ENCODE measurements at regions of chr19 and their contacts with region 1.

Region 1: DNA sequence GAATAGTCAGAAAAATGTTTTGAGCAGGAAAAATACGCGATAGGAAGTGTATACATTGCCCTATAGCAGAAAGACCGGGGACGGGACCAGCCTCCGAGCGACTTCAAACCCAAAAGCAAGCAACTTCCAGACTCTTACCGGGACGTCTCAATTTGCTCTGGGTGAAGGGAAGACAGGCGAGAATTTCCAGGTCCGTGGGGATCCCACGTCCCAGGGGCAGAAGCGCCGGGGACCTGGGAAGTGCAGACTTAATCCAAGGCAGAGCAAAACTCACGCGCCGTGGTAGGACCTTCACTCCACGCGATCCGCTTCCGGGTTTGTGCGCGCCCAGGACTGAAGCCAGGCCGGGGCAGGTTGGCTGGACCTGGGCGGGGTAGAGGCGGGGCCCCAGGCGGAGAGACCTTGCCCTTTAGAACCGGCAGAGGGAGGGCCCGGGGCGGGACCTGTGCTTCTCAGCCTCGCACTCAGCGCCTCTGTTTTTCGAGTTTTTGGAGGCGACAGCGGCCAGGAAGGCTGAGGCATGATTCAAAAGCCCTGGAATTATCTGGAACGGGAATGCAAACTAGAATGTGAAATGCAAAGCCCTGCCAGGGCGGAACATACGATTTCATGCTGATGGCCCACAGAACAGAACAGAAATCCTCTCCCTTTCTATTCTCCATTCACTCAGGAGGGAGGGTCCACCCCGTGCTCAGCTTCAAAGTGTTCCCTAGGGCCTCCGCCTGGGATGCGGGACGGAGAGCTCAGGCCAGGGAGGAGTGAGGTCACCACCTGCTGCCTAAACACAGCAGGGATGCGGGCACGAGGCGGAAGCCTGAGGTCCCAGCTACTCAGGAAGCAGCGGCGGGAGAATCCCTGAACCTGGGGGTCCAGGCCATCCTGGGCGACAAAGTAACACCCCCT is at the start of gene ZNF600:
- DNase-seq: peak; percentile 84
- H3K4me3 Mint-ChIP-seq: peak within 1 kb of the TSS; percentile 83
- H3K27ac Mint-ChIP-seq: peak within 1 kb of the TSS; percentile 50
- H3K4me1 Mint-ChIP-seq: peaks cover 28% of the 10 kb centered on the region
- H3K27me3 Mint-ChIP-seq: no peaks in the 10 kb centered on the region
- total RNA-seq, gene ZNF600: 4.8 to 4.9 TPM

Region 2: GRCh38 chr19:52809801-52810200 is 23.1 kb after region 1 on chr19:
- CTCF ChIA-PET with region 1: no interaction called
- intact Hi-C with region 1: no loop called
- DNase-seq: no peak
- H3K4me3 Mint-ChIP-seq: no peak overlapping the region
- H3K27ac Mint-ChIP-seq: no peak overlapping the region
- H3K4me1 Mint-ChIP-seq: no peaks in the 10 kb centered on the region
- H3K27me3 Mint-ChIP-seq: no peaks in the 10 kb centered on the region

Region 3: GRCh38 chr19:52823676-52824075 is 37.0 kb after region 1 on chr19:
- CTCF ChIA-PET with region 1: no interaction called
- intact Hi-C with region 1: loop called (anchors 5 kb)
- DNase-seq: no peak
- H3K4me3 Mint-ChIP-seq: no peak overlapping the region
- H3K27ac Mint-ChIP-seq: no peak overlapping the region
- H3K4me1 Mint-ChIP-seq: peaks cover 10% of the 10 kb centered on the region
- H3K27me3 Mint-ChIP-seq: no peaks in the 10 kb centered on the region